ENCODE measurements at regions of chr5 and their contacts with region 1.

Region 1: GRCh38 chr5:133111299-133111698 is 59.5 kb downstream of the HSPA4 start:
- DNase-seq: peak; percentile 92
- ATAC-seq: peak; percentile 87

Region 2: GRCh38 chr5:133869519-133870335 is 758.4 kb after region 1 on chr5:
- intact Hi-C with region 1: loop called (anchors 2 kb)
- DNase-seq: peak; percentile 70
- ATAC-seq: peak; percentile 86